Activated B cell treated with CpG ODN at 0.5 μM for 24 hours (primary cell): ENCODE measurements at regions of chr7 and their contacts with region 1.

Region 1: DNA sequence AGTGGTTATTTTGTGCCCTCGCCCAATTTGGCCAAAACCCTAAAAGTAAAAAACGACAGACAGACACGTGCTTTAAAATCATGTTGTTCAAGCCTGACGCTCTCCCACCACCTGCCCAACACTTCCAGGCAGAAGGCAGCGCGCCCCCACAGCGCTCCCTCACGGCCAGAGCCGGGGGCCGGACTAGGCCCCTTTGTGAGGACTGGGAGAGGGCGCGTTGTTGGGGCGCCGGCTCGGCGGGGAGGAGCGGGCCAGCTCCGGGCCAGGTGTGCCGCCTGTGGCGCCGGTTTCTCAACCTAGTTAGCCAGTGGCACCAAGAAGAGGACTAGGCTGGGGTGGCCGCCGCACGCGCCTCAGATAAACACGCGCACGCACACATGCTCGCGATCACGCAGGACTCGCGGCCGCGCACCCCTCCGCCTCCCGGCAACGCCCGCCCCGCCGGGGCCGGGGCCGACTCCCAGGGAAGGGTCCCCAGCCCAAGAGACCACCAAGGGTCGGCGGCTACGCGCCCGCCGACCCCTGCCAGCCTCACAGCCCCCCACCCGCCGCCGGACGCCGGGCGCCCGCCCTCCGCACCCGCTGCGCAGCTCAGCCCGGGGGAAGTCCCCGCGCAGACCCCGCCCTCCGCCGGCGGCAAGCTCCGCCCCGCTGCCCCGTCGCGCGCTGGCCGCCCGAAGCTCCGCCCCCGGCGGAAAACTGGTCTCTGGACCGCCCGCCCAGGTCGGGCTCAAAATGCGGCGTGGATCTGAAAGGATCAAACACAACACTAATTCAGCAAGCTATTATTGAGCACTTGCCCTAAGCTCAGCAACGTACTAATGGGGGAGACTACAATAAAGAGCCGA is at the start of gene IMMP2L:
- DNase-seq: peak; percentile 98
- ATAC-seq: peak; percentile 95
- H3K4me3 Mint-ChIP-seq: peak within 1 kb of the TSS; percentile 87
- H3K27ac Mint-ChIP-seq: peak within 1 kb of the TSS; percentile 88
- H3K4me1 Mint-ChIP-seq: peaks cover 32% of the 10 kb centered on the region
- H3K27me3 Mint-ChIP-seq: peaks cover 3% of the 10 kb centered on the region
- CTCF ChIP-seq: no peak
- total RNA-seq, gene IMMP2L: 28.5 and 31.9 TPM in 2 replicates

Region 2: DNA sequence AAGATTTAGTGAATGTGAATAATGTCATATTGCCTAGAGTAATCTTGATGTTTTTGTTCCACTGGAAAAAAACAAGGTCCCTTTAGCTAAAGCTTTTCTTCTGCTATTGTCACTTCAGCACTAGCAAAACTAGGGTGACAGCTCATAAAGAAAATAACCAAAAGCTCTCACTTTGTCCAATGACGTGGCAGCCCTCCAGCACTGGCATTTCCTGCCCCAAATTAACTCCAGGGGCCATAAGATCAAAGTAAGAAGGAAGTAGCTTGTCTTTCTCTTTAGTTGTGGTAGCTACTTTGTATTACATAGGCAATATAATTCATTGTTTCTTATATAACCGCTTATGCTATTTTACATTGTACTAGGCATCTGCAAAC is 423.9 kb before region 1 on chr7:
- CTCF ChIA-PET with region 1: no interaction called
- POLR2A ChIA-PET with region 1: interaction called, 10 read pairs
- intact Hi-C with region 1: loop called (anchors 5 kb)
- DNase-seq: peak; percentile 16
- ATAC-seq: peak; percentile 77
- H3K4me3 Mint-ChIP-seq: peak overlapping the region; percentile 73
- H3K27ac Mint-ChIP-seq: peak overlapping the region; percentile 94
- H3K4me1 Mint-ChIP-seq: peaks cover 28% of the 10 kb centered on the region
- H3K27me3 Mint-ChIP-seq: no peaks in the 10 kb centered on the region
- CTCF ChIP-seq: no peak

Region 3: GRCh38 chr7:112080441-112080840 is 518.3 kb after region 1 on chr7:
- CTCF ChIA-PET with region 1: no interaction called
- POLR2A ChIA-PET with region 1: interaction called, 3 read pairs
- intact Hi-C with region 1: loop called (anchors 5 kb)
- DNase-seq: no peak
- ATAC-seq: peak; percentile 84
- H3K4me3 Mint-ChIP-seq: peak overlapping the region; percentile 33
- H3K27ac Mint-ChIP-seq: peak overlapping the region; percentile 33
- H3K4me1 Mint-ChIP-seq: peaks cover 48% of the 10 kb centered on the region
- H3K27me3 Mint-ChIP-seq: no peaks in the 10 kb centered on the region
- CTCF ChIP-seq: no peak

Region 4: DNA sequence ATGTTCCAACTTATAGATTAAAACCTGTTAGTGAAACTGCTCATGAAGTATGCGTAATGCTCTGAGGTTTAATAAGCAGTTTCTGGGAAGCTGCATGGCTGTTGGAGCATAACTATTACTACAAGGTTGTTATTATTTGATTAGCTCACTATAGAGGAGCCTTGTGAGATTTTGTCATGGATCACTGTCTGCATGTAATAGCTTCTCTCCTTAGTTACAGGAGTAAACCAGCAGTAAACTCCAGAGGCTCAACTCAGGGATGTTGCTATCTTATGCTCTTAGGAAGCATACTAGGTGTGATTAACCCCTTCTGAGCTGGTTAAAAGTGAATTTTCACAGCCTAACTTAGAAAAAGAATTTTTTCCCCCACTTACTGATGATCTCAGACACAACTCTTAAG is 824.5 kb after region 1 on chr7:
- CTCF ChIA-PET with region 1: no interaction called
- POLR2A ChIA-PET with region 1: no interaction called
- intact Hi-C with region 1: loop called (anchors 1 kb)
- DNase-seq: no peak
- ATAC-seq: no peak
- H3K4me3 Mint-ChIP-seq: no peak overlapping the region
- H3K27ac Mint-ChIP-seq: no peak overlapping the region
- H3K4me1 Mint-ChIP-seq: peaks cover 5% of the 10 kb centered on the region
- H3K27me3 Mint-ChIP-seq: peaks cover 5% of the 10 kb centered on the region
- CTCF ChIP-seq: no peak

Region 5: GRCh38 chr7:112939574-112940314 is 1377.6 kb after region 1 on chr7:
- CTCF ChIA-PET with region 1: no interaction called
- POLR2A ChIA-PET with region 1: no interaction called
- intact Hi-C with region 1: loop called (anchors 1 kb)
- DNase-seq: peak; percentile 97
- ATAC-seq: peak; percentile 95
- H3K4me3 Mint-ChIP-seq: peak overlapping the region; percentile 99
- H3K27ac Mint-ChIP-seq: peak overlapping the region; percentile 97
- H3K4me1 Mint-ChIP-seq: peaks cover 46% of the 10 kb centered on the region
- H3K27me3 Mint-ChIP-seq: no peaks in the 10 kb centered on the region
- CTCF ChIP-seq: no peak